PC-9 (cell line): ENCODE measurements at regions of chr16 and their contacts with region 1.

Region 1: GRCh38 chr16:84970447-84971127 is 40.7 kb downstream of the ZDHHC7 start:
- DNase-seq: peak; percentile 61 to 74
- H3K4me3 ChIP-seq: no peak overlapping the region
- H3K27ac ChIP-seq: no peak overlapping the region
- H3K4me1 ChIP-seq: peaks cover 10% of the 10 kb centered on the region
- H3K27me3 ChIP-seq: no peaks in the 10 kb centered on the region
- CTCF ChIP-seq: peak; percentile 95

Region 2: DNA sequence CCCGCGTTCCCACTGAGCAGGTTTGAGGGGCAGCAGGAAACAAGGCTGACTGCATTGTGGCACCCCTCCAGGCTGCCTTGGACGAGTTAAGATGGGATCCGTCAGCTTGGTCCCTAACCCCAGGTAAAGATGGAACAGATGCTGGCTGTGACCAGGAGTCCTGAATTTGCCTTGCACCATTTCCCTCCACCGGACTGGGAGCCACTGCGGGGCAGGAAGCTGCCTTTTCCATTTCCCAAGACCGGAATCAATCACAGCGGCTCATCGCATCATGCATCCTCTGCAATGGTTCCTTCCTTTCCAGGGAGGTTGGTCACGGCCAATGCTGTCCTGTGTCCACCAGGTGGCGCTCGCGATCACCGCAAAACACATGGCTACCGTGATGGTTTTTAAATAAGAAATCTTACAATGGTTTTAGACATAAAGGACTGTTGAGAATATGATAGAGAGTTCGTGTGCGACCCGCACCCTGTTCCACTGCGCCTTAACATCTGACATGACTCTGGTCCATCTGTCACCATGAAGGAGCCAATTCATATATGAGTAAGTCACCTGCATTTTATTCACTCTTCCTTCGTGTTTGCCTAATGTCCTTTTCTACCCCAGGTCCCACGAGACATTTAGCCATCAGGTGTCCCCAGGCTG is 459.3 kb before region 1 on chr16:
- CTCF ChIA-PET with region 1: no interaction called
- POLR2A ChIA-PET with region 1: interaction called, 9 read pairs
- intact Hi-C with region 1: loop called (anchors 5 kb)
- DNase-seq: peak; percentile 66 to 76
- H3K4me3 ChIP-seq: no peak overlapping the region
- H3K27ac ChIP-seq: no peak overlapping the region
- H3K4me1 ChIP-seq: peaks cover 9% of the 10 kb centered on the region; the same call in 1 of the 2 replicates
- H3K27me3 ChIP-seq: no peaks in the 10 kb centered on the region
- CTCF ChIP-seq: peak; percentile 96

Region 3: DNA sequence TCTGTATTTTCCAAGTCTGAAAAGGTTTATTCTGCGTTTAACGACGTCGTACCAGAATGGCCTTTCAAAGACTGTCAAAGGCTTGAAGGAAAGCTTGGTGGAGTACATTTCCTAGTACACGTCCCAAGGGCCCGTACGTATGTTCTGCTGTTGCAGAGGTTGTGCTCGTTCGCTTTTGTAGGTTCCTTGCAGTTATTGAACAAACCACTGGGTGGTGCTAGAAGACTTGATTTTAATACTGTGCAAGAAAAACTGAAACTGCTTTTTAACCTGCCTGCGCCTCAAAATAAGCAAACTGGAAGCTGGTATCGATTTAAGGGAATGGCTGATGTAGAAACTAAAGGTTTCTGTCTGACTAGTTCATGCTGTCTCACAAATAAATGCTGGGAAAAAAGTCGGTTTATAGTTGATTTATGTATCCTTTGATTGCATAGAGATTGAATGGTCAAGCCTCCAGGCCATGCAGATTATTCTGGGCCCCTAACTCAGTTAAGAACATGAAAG is 216.2 kb before region 1 on chr16:
- CTCF ChIA-PET with region 1: interaction called, 28 read pairs
- POLR2A ChIA-PET with region 1: no interaction called
- intact Hi-C with region 1: loop called (anchors 1 kb)
- DNase-seq: peak; percentile 61 to 75
- H3K4me3 ChIP-seq: no peak overlapping the region
- H3K27ac ChIP-seq: peak overlapping the region; percentile 22
- H3K4me1 ChIP-seq: peaks cover 11% of the 10 kb centered on the region; the same call in 1 of the 2 replicates
- H3K27me3 ChIP-seq: no peaks in the 10 kb centered on the region
- CTCF ChIP-seq: peak; percentile 92

Region 4: DNA sequence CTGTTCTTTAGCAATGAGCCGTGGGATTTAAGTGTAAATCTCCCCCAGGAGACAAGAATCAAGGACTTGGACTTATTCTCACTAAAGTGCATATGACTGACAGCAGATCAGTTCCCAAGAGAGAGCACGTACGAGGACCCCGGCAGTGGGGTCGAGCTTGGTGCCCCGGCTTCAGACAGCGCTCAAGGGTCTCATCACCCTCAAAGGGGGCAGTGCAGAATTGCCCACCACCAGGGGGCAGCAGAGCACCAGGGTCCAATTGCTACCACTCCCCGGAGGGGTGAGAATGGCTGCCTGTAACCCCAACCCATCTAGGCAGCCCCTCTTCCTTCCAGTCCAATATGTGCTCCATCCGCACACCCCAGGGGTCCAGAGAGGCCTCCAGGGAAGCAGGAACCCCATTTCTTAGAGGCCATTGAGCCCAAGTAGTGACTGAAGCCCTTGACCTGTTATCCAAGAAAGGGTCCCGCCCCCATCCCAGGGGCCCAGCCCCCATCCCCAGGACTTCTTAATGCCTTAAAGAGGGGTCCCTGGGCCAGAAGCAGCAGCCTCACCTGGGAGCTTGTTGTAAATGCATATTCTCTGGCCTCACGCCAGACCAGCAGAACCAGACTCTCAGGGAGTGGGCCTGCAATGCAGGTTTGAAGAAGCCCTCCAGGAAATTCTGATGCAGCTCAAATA is 45.4 kb before region 1 on chr16:
- CTCF ChIA-PET with region 1: interaction called, 5 read pairs
- POLR2A ChIA-PET with region 1: no interaction called
- intact Hi-C with region 1: loop called (anchors 1 kb)
- DNase-seq: peak in 1 of 2 experiments; percentile 53
- H3K4me3 ChIP-seq: no peak overlapping the region
- H3K27ac ChIP-seq: no peak overlapping the region
- H3K4me1 ChIP-seq: no peaks in the 10 kb centered on the region
- H3K27me3 ChIP-seq: no peaks in the 10 kb centered on the region
- CTCF ChIP-seq: peak; percentile 98

Region 5: GRCh38 chr16:85014311-85014710 is 43.7 kb after region 1 on chr16:
- CTCF ChIA-PET with region 1: no interaction called
- POLR2A ChIA-PET with region 1: no interaction called
- intact Hi-C with region 1: no loop called
- DNase-seq: no peak
- H3K4me3 ChIP-seq: no peak overlapping the region
- H3K27ac ChIP-seq: no peak overlapping the region
- H3K4me1 ChIP-seq: peaks cover 35% of the 10 kb centered on the region
- H3K27me3 ChIP-seq: no peaks in the 10 kb centered on the region
- CTCF ChIP-seq: no peak

Region 6: DNA sequence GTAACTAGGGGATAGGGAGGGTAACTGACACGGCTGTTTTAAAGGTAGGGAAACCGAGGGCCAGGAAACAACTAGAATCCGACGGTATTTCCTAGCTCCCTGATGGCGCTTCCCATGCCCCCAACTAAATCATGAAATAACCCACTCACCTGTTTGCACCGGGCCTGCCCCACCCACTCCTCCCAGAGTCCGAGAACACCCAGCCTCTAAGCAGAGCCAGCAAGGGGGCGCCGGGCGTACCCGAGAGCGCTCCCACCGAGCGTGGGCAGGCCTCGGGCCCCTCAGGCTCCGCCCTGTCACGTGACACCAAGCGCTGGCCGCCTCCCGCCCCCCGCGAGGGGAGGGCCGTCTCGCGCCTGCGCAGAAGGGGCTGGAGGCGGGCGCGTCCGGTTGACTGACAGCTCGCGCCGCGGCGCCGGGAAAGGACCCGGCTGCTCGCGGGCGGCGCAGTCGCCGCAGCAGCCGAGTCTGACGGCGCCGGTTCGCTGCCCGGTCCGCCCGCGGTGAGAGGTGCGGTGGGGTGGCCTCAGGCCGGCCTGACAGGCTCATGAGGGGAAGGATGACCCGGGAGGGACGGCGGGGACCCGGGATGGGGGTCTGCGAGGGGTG is 56.9 kb after region 1 on chr16 and contains the start of gene KIAA0513:
- CTCF ChIA-PET with region 1: no interaction called
- POLR2A ChIA-PET with region 1: no interaction called
- intact Hi-C with region 1: no loop called
- DNase-seq: peak; percentile 73 to 95
- H3K4me3 ChIP-seq: peak within 1 kb of the TSS; percentile 93
- H3K27ac ChIP-seq: peak within 1 kb of the TSS; percentile 52
- H3K4me1 ChIP-seq: peaks cover 52% of the 10 kb centered on the region
- H3K27me3 ChIP-seq: no peaks in the 10 kb centered on the region
- CTCF ChIP-seq: no peak; the same call in 1 of the 2 replicates
- total RNA-seq, gene KIAA0513: 4.2 and 4.3 TPM in 2 replicates

Region 7: DNA sequence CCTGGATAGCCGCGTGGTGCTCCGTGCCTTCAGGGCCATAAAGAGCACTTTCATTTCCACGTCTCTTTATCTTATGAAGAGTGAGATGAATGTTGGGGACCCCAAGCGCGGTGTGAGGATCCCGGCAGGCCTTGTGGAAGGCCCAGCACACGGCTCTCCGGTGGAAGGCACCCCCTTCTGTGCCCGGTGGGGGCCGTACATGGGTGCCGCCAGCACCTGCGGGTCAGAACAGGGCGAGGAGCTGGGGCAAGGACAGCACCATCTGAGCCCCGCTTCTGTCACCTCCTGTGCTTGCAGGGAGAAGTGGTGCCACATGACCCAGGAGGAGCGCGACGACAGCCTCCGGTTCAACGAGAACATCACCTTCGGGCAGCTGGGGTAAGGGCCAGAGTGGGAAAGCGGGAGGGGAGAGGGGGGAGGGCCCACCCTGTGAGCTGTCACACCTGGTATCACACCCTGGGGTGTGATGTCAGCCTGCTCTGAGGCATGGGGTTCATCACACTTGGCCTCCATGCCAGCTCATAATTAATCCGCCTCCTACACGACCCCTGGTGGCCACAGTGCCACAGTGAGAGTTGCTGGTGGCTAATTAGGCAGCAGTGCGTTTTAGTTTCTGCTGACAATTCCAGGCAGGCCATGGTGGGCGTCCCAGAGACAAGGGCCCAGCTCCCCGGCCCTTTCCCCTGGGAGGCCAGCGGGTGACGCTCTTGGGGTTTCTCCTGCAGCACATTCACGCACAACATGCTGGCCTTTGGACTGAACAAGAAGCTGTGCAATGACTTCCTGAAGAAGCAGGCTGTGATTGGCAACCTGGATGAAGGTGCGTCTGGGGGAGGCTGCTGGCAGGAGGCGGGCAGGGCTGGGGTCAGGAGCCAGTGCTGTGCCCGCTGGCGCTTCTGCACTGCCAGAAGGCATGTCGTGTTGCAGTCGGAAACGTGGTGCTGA is 116.0 kb after region 1 on chr16:
- CTCF ChIA-PET with region 1: interaction called, 16 read pairs
- POLR2A ChIA-PET with region 1: no interaction called
- intact Hi-C with region 1: loop called (anchors 1 kb)
- DNase-seq: peak; percentile 52 to 75
- H3K4me3 ChIP-seq: no peak overlapping the region
- H3K27ac ChIP-seq: no peak overlapping the region
- H3K4me1 ChIP-seq: no peaks in the 10 kb centered on the region
- H3K27me3 ChIP-seq: 0 out of 2 replicates have a peak, but pooled peaks cover 9% of the 10 kb centered on the region
- CTCF ChIP-seq: peak; percentile 86